ENCODE measurements at regions of chr9 and their contacts with region 1.

Region 1: DNA sequence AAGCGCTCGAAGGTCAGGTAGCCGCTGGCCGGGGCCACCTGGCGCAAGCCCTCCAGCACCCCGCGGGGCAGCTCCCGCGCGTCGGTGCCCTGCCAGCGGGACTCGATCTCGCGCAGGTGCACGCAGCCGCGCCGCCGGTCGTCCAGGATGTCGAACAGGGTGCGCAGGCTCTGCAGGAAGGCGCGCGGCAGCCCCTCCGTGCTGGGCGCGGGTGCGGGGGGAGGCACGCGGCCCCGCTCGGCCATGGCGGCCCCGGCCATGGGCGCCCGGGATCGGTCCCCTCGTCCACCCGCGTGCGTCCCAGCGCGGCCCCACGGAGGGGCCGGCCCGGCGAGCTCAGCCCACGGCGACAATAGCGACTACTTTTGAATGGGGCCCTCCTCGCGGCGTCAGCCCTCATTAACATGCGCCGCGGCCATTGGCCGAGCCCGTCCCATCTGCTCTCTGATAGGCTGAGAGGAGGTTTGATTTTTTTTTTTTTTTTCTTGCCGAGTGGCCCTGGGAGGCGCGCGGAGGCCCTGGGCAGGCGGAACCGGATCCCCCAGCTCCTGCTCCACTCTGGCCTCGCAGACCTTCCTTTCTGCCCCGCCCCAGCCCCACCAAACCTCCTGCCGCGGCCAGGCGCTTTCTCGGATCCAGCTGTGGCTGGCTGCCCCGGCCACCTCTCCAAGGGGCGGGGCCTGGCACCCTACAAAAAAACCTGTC is at the start of gene SAPCD2:
- DNase-seq: no peak
- H3K4me3 ChIP-seq: peak within 1 kb of the TSS; percentile 53
- CTCF ChIP-seq: no peak

Region 2: GRCh38 chr9:136790927-136791641 is 279.3 kb before region 1 on chr9 and contains the start of gene TMEM141:
- CTCF ChIA-PET with region 1: interaction called, 50 read pairs
- POLR2A ChIA-PET with region 1: no interaction called
- DNase-seq: peak; percentile 93
- H3K4me3 ChIP-seq: peak within 1 kb of the TSS; percentile 94
- CTCF ChIP-seq: no peak

Region 3: DNA sequence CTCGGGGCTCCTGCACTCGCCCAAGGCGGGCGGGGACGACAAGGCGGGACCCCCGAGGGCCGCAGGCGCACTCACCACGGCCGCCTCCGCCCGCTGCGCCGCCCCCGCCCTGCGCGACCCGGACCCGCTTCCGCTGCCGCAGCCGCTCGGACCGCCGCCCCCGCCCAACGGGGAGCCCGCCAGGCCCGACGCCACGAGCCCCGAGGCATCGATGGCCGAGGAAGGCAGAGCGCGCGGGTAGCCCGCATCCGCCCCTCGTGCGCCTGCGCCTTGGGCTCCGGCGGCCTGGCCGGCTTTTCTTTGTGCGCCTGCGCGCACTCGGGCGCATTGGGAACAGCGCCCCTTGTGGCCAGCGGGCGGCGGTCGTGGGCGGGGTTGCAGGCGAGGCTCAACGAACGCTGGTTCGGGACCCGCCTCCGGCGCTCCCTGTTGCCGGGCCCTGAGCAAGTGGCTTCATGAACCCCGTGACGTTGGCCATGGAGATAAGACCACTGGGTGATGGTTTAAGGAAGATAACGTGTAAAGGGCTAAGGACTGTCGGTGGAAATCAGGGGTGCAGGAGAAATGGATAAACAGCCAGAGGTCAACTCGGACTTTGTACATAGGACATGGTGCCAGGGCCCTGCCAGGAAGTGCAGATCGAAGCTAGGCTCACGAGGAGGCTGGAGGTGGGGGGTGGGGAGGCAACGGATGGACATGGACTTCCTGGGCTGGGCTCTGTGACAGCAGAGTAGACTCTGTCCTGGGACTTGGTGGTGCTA is 125.7 kb before region 1 on chr9 and contains the starts of genes C8G and FBXW5:
- CTCF ChIA-PET with region 1: interaction called, 18 read pairs
- POLR2A ChIA-PET with region 1: no interaction called
- DNase-seq: peak; percentile 14
- H3K4me3 ChIP-seq: peak within 1 kb of the TSS; percentile 81
- CTCF ChIP-seq: peak; percentile 96

Region 4: DNA sequence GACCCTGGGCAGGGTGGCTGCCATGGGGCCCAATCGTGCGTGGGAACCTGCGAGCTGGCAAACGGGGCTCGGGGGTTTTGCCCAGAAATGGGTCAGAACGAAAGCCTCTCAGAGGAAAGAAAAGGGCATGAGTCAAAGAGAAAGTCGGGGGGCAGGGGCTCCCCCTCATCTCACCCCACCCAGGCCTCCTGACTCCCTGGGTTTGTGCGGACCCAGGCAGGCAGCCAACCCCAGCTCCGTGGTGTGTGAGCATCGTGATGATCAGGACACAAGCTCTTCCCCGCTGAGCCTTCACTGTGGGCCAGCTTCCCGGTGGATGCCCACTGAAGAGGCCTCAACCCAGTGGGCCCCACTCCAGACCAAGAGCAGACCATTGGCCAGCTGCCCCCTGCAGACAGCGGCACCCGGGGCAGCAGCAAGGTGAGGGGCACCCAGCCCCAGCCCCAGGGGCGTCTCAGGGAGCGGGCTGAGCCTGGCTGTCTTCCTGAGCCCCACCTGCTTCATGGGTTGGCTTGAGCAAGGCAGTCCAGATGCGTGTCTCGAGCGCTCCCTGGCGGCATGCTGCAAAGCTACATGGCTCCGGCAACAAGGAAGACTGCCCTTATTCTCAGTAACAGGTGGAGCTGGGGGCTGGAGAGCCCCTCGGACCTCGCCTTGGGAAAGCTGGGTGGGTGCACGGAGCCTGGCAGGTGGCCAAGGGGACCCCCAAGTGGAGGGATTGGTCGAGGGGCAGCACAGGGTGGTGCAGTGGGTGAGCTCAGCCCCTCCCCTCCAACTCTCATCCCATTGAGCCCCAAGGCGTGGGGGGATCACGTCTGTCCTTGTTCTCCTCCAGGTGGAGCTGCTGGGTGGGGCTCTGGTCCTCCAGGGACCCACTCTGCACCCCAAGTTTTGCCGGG is 35.2 kb before region 1 on chr9:
- CTCF ChIA-PET with region 1: interaction called, 310 read pairs
- POLR2A ChIA-PET with region 1: no interaction called
- DNase-seq: peak; percentile 31
- H3K4me3 ChIP-seq: no peak overlapping the region
- CTCF ChIP-seq: peak; percentile 96

Region 5: DNA sequence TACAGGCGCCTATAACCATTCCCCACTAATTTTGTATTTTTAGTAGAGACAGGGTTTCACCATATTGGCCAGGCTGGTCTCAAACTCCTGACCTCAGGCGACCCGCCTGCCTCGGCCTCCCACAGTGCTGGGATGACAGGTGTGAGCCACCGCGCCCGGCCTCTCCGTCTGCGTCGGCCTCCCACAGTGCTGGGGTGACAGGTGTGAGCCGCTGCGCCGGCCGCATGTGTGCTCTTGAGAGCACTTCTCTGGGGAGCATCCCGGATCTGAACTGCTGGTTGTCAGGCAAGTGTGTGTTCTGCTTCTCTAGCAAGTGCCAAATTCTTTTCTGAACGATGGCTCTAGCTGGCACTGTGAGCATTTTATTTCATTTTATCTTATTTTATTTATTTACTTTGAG is 12.8 kb before region 1 on chr9:
- CTCF ChIA-PET with region 1: interaction called, 364 read pairs
- POLR2A ChIA-PET with region 1: no interaction called
- DNase-seq: no peak
- H3K4me3 ChIP-seq: no peak overlapping the region
- CTCF ChIP-seq: no peak

Region 6: DNA sequence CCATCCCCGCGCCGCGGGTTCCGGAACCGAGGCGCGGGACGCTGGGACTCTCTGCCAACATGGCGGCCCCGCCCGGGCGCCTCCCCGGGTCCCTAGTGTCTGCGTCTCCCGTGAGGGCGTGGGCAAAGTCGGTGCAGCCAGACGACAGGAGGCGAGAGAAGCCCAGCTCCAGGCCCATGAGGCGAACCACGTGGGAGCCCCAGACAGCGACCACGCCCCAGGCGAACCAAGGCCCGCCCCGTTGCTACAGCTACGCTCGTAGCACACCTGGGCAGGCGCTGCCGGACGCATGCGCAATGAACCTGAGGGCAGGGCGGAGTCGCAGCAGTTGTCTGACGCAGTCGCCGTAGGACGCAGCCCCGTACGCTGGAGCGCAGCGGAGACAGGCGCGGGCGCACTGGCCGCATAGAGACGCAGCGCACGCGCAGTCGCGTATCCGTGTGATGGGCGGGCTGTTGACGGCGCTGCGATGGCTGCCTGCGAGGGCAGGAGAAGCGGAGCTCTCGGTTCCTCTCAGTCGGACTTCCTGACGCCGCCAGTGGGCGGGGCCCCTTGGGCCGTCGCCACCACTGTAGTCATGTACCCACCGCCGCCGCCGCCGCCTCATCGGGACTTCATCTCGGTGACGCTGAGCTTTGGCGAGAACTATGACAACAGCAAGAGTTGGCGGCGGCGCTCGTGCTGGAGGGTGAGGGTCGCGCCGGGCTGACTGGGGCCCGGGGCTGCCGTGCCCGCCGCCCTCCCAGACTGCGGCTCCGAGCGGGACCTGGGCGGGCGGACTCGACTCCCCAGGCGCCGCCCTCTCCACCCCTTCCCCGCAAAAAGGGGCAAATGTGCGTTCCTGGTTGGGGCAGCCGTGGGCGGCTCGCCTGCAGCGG is 16.4 kb after region 1 on chr9 and contains the start of gene MAN1B1:
- CTCF ChIA-PET with region 1: interaction called, 208 read pairs
- POLR2A ChIA-PET with region 1: interaction called, 3 read pairs
- DNase-seq: peak; percentile 85
- H3K4me3 ChIP-seq: peak within 1 kb of the TSS; percentile 78
- CTCF ChIP-seq: no peak

Region 7: DNA sequence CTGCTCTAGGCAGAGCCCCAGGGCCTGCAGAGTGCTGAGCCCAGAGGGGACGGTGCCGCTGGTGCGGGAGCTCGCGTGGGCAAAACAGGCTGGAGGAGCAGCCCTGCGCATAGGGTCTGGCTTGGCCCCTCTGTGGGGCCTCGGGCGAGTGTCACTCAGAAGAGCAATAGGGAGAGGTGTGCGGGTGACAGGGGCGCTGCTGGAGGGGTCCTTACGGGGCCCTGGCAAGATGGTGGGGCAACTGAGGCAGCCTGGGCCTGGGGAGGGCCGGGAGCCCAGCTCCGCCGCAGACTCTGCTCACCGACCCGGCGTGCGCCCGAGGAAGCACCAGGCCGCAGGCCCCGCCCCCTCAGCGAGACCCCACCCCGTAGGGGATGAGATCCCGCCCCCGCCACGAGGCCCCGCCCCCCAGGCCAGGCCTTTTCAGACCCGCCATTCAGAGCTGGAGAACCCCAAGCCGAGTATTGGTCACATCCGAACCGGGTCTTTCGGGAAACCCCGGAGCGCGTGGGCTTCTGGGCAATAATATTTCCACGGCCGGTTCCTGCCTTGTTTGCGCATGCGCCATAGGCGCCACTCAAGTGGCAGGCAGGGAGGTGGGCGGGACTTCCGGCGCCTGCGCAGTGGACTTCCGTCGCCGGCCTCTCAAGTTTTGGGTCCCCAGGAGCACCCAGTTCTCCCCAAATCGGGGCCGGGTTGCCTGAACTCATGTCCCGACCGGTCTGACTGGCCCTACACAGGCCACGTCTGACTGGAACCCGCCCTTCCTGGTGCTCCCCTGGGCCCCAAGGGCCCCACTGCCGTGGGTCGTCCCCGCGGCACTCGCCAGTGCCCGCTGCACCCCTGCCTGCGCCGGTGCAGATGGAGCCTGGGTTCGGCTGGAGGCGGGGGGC is 153.0 kb after region 1 on chr9:
- CTCF ChIA-PET with region 1: interaction called, 11 read pairs
- POLR2A ChIA-PET with region 1: no interaction called
- DNase-seq: peak; percentile 80
- H3K4me3 ChIP-seq: peak overlapping the region; percentile 87
- CTCF ChIP-seq: no peak